Endothelial cell of umbilical vein (primary cell): ENCODE measurements at regions of chr4 and their contacts with region 1.

Region 1: GRCh38 chr4:106315968-106316772 is at the starts of genes AIMP1 and TBCK:
- DNase-seq: peak; percentile 92
- H3K4me3 ChIP-seq: peak within 1 kb of the TSS; percentile 49 to 96 (median 83)
- H3K27ac ChIP-seq: peak within 1 kb of the TSS; percentile 92
- H3K4me1 ChIP-seq: peaks cover 20% of the 10 kb centered on the region
- H3K27me3 ChIP-seq: no peaks in the 10 kb centered on the region
- CTCF ChIP-seq: no peak
- POLR2A ChIP-seq: peak; percentile 78
- total RNA-seq, gene AIMP1: 42.4 and 44.7 TPM in 2 replicates
- total RNA-seq, gene TBCK: 29.0 and 38.6 TPM in 2 replicates

Region 2: GRCh38 chr4:105708530-105709391 is 607.4 kb before region 1 on chr4 and contains the starts of genes GSTCD and INTS12:
- CTCF ChIA-PET with region 1: no interaction called
- POLR2A ChIA-PET with region 1: no interaction called
- dilution Hi-C with region 1: no loop called
- intact Hi-C with region 1: loop called (anchors 5 kb)
- DNase-seq: peak; percentile 95
- H3K4me3 ChIP-seq: peak within 1 kb of the TSS; percentile 46 to 93 (median 93)
- H3K27ac ChIP-seq: peak within 1 kb of the TSS; percentile 61
- H3K4me1 ChIP-seq: peaks cover 16% of the 10 kb centered on the region
- H3K27me3 ChIP-seq: no peaks in the 10 kb centered on the region
- CTCF ChIP-seq: peak in 1 of 2 donors; percentile 0
- POLR2A ChIP-seq: peak; percentile 89
- total RNA-seq, gene GSTCD: 11.3 and 13.1 TPM in 2 replicates
- total RNA-seq, gene INTS12: 19.5 and 19.7 TPM in 2 replicates

Region 3: GRCh38 chr4:106273831-106274230 is 42.3 kb before region 1 on chr4:
- CTCF ChIA-PET with region 1: no interaction called
- POLR2A ChIA-PET with region 1: no interaction called
- dilution Hi-C with region 1: no loop called
- intact Hi-C with region 1: loop called (anchors 1 kb)
- DNase-seq: peak; percentile 65
- H3K4me3 ChIP-seq: no peak overlapping the region
- H3K27ac ChIP-seq: peak overlapping the region; percentile 59
- H3K4me1 ChIP-seq: peaks cover 34% of the 10 kb centered on the region
- H3K27me3 ChIP-seq: no peaks in the 10 kb centered on the region
- CTCF ChIP-seq: no peak
- POLR2A ChIP-seq: no peak

Region 4: DNA sequence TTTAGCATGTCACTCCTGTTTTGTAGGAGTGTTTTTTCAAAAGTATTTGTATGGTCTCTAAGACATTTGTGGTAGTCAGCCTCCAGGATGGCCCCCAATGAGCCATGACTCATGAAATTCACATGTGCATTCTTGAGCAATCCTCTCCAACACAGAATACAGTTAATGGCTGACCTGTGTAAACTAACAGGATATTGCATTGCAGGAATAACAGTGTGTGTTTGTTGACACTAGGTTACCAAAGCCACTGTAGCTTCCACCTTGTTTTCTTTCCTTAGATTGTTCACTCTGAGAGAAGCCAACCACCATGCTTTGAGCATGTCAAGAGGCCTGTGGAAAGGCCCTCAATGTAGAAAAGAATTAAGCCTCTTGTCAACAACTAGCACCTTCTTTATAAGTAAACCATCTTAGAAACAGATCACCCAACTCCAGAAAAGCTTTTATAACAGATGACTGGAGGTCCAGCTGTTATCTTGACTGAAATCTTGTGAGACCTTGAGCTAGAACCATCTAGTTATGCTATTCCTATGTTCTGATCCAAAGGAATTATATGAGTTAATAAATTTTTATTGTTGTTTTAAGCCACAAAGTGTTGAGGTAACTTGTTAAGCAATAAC is 28.7 kb before region 1 on chr4:
- CTCF ChIA-PET with region 1: no interaction called
- POLR2A ChIA-PET with region 1: no interaction called
- dilution Hi-C with region 1: no loop called
- intact Hi-C with region 1: loop called (anchors 1 kb)
- DNase-seq: peak; percentile 85
- H3K4me3 ChIP-seq: no peak overlapping the region
- H3K27ac ChIP-seq: peak overlapping the region; percentile 79
- H3K4me1 ChIP-seq: peaks cover 9% of the 10 kb centered on the region
- H3K27me3 ChIP-seq: no peaks in the 10 kb centered on the region
- CTCF ChIP-seq: no peak
- POLR2A ChIP-seq: no peak

Region 5: DNA sequence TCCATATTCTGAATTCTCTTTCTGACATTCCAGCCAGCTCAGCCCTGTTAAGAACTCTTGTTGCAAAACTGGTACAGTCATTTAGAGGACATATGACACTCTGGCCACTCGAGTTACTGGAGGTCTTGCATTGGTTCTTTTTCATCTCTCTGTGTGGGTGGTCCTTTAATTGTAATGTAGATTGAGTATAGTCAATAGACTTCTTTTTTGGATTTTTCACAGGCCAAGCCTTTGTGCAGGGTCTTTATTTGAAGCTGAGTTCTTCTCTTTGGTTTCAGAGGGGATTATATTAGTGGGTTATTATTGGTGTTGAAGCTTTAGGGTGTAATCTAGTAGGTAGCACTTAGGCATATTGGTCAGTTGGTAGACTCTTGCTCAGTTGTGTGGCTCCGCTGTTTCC is 170.4 kb after region 1 on chr4:
- CTCF ChIA-PET with region 1: no interaction called
- POLR2A ChIA-PET with region 1: no interaction called
- dilution Hi-C with region 1: no loop called
- intact Hi-C with region 1: no loop called
- DNase-seq: no peak
- H3K4me3 ChIP-seq: no peak overlapping the region
- H3K27ac ChIP-seq: no peak overlapping the region
- H3K4me1 ChIP-seq: no peaks in the 10 kb centered on the region
- H3K27me3 ChIP-seq: no peaks in the 10 kb centered on the region
- CTCF ChIP-seq: no peak
- POLR2A ChIP-seq: no peak